Activated CD4-positive, alpha-beta memory T cell treated with anti-CD3 and anti-CD28 coated beads, Interleukin-2, amount 10 ng/mL, durations not matched to agents 7 days and 5 days (primary cell): ENCODE measurements at regions of chr11 and their contacts with region 1.

Region 1: DNA sequence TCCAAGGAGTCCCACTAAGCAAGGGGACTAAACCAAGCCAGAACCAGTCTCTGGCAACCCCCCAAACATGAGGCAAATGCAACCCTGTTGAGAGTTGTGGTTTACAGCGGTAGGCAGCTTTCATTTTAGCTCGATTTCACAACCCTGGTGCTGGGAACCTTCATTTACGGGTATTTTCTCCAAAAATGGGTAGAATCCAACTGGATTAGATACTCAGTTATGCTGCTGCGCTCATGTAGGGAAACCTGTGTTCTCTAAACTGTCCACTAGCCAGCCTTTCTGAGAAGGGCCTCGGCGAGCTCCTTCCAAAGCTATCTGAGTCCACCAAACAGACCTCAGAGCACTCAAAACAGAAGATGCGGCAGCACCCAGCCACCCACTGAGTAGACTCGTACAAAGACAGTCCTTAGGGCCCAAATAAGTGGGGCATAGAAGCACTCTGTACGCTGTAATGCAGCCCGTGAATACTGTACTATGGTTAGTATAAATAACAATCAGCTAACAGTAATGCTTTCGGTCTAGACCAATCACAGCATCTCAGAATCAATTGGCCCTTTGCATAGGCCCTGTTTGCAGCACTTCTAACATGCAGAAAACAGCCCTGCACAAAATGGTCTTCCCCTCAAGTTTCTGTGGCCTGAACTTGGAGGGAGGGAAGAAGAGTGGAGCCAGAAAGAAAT is 104.7 kb downstream of the ETS1 start:
- DNase-seq: peak; percentile 59
- H3K4me3 Mint-ChIP-seq: peak overlapping the region; percentile 67
- H3K27ac Mint-ChIP-seq: peak overlapping the region; percentile 92
- H3K4me1 Mint-ChIP-seq: peaks cover 95% of the 10 kb centered on the region
- H3K27me3 Mint-ChIP-seq: no peaks in the 10 kb centered on the region

Region 2: DNA sequence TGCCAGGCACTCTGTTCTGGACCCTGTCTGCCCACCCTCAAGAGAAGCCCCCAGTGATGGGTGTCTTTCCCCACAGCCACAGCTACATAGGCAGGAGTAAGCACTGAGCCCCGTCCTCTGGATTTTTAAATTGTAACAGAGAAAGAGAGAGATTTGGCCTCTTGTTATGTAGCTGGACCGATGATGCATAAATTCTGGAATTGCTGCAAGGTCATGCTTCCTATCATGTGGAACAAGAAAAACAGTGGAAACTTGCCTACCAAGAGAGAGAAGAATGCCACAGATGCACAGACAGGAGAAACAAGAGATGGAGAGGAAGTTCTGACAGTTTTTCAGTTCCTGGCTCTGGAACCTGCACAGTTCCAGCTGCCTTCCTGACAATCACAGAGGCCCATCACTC is 45.5 kb before region 1 on chr11:
- CTCF ChIA-PET with region 1: no interaction called
- POLR2A ChIA-PET with region 1: no interaction called
- DNase-seq: no peak
- H3K4me3 Mint-ChIP-seq: no peak overlapping the region
- H3K27ac Mint-ChIP-seq: no peak overlapping the region
- H3K4me1 Mint-ChIP-seq: peaks cover 2% of the 10 kb centered on the region
- H3K27me3 Mint-ChIP-seq: no peaks in the 10 kb centered on the region

Region 3: DNA sequence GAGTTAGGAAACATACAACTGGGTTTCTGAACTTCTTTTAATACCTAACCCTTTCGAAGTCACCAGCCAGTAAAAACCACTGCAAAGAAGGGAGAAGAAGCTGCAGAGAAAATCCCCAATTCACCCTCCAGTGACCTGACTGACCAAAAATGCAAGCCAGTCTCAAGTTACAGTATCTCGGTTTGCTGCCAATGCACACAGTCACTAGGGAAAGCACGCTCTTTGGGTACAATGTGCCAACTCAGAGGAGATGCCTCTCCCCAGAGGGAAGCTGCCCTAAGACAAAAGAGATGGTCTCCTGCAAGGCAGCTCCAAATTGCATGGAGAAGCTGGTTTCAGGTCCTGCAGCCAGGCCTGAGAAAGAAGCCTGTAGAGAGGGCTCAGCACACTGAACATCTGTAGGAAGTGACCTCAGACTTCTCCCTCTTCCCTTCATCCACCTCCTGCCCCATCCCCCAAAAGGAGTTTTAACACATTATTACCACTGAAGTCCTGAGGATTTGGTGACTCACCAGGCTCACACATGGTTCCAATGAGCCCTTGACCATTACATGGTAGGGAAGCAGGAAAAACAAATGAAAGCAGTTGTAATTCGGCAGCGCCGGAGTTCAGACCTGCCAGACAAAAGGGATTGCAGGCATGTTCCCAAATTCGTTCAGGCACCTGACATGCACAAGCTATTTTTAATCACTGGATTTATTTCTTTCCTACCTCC is 14.6 kb after region 1 on chr11:
- CTCF ChIA-PET with region 1: interaction called, 13 read pairs
- POLR2A ChIA-PET with region 1: interaction called, 1,025 read pairs
- DNase-seq: no peak
- H3K4me3 Mint-ChIP-seq: peak overlapping the region; percentile 58
- H3K27ac Mint-ChIP-seq: peak overlapping the region; percentile 87
- H3K4me1 Mint-ChIP-seq: peaks cover 96% of the 10 kb centered on the region
- H3K27me3 Mint-ChIP-seq: no peaks in the 10 kb centered on the region

Region 4: DNA sequence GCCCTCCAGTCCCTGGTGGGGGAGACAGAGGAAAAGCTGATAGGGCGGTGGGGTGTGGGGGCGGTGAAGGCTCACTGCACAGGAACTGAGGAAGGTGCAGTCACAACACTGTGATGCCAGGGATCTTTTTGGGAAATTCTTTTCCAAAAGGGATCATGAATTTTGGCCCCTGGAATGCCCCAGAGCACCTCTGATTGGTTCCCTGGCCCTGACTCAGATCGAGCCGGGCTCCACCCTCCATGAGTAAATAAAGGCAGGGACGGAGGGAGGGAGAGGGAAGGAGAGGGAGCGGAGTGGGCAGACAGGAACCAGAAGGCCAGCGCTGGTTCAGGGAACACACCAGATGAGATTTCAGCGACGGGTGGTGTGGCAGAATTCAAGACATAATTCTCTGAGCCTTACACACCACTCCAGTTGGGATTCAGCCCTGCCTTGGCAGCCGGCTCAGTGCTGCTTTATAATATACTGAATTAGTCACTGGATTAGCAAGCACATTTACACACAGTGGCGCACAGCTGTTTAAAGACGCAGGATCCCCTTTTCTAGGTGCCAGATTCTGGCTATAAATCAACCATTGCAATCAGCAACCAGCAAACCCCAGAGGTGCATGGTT is 24.5 kb after region 1 on chr11:
- CTCF ChIA-PET with region 1: interaction called, 28 read pairs
- POLR2A ChIA-PET with region 1: interaction called, 1,025 read pairs
- DNase-seq: no peak
- H3K4me3 Mint-ChIP-seq: peak overlapping the region; percentile 69
- H3K27ac Mint-ChIP-seq: peak overlapping the region; percentile 71
- H3K4me1 Mint-ChIP-seq: peaks cover 99% of the 10 kb centered on the region
- H3K27me3 Mint-ChIP-seq: no peaks in the 10 kb centered on the region